HepG2 (cell line): ENCODE measurements at regions of chr2 and their contacts with region 1.

Region 1: DNA sequence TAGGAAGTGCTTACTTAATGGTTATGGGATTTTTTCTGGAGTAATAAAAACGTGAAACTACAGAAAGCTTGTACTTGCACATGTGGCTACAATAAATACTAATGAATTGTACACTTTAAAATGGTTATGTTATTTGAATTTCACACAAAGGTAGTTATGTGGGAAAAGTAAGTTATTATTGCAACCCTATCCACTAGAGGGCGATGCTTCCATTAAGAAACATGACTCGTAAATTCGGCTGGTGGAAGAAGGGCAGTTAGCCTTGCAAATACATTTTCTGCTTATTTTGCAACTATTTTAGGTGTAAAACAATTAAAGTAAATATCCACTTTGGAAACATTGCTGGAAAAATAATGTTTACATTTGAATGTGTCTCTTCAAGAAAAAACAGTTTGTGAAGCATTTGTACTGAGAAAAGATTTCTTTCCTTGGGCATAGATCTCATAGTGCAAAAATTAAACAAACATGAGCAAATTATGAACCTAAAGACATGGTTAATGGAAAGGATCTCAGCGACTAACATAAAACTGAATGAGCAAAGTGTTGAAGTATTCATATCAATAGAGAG is 68.1 kb upstream of the CSRNP3 start:
- DNase-seq: peak; percentile 67
- ATAC-seq: peak; percentile 70; the same call in 2 of the 3 replicates
- H3K4me3 ChIP-seq: no peak overlapping the region
- H3K27ac ChIP-seq: no peak overlapping the region
- H3K4me1 ChIP-seq: peaks cover 5% of the 10 kb centered on the region; the same call in 1 of the 2 replicates
- H3K27me3 ChIP-seq: no peaks in the 10 kb centered on the region
- CTCF ChIP-seq: peak; percentile 82
- EP300 ChIP-seq: no peak
- POLR2A ChIP-seq: no peak
- RAD21 ChIP-seq: peak; percentile 49; the same call in 1 of the 2 replicates

Region 2: GRCh38 chr2:165698444-165698894 is 297.1 kb after region 1 on chr2:
- CTCF ChIA-PET with region 1: no interaction called
- POLR2A ChIA-PET with region 1: no interaction called
- in situ Hi-C with region 1: no loop called
- intact Hi-C with region 1: loop called (anchors 2 kb)
- DNase-seq: peak; percentile 44
- ATAC-seq: peak; percentile 95
- H3K4me3 ChIP-seq: no peak overlapping the region
- H3K27ac ChIP-seq: no peak overlapping the region
- H3K4me1 ChIP-seq: no peaks in the 10 kb centered on the region
- H3K27me3 ChIP-seq: 0 out of 5 replicates have a peak, but pooled peaks cover 0 to 2% of the 10 kb centered on the region in 2 experiments
- CTCF ChIP-seq: peak; percentile 61
- EP300 ChIP-seq: no peak
- POLR2A ChIP-seq: no peak
- RAD21 ChIP-seq: no peak

Region 3: GRCh38 chr2:165874445-165875039 is 473.2 kb after region 1 on chr2:
- CTCF ChIA-PET with region 1: interaction called, 8 read pairs
- POLR2A ChIA-PET with region 1: no interaction called
- in situ Hi-C with region 1: loop called (anchors 5 kb)
- intact Hi-C with region 1: loop called (anchors 1 kb)
- DNase-seq: peak; percentile 72
- ATAC-seq: peak; percentile 80
- H3K4me3 ChIP-seq: no peak overlapping the region
- H3K27ac ChIP-seq: no peak overlapping the region
- H3K4me1 ChIP-seq: peaks cover 13% of the 10 kb centered on the region
- H3K27me3 ChIP-seq: no peaks in the 10 kb centered on the region
- CTCF ChIP-seq: peak; percentile 68
- EP300 ChIP-seq: no peak
- POLR2A ChIP-seq: no peak
- RAD21 ChIP-seq: peak; percentile 36; the same call in 1 of the 2 replicates